ENCODE measurements at regions of chr13 and their contacts with region 1.

Region 1: DNA sequence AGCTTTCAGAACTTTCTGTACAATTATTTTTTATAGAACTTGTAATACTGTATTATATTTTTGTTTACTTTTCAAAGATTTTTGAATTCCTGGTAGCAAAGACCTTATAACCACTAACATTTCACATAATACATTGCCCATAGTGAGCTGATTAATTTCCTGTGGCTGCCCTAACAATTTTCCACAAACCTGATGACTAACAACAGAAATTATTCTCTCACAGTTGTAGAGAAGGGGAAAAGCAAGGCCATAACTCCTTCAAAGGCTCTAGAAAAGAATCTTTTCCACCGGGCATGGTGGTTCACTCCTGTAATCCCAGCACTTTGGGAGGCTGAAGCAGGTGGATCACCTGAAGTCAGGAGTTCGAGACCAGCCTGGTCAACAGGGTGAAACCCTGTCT is 19.1 kb downstream of the KLF12 start:
- DNase-seq: no peak
- ATAC-seq: peak in 2 of 3 donors; percentile 34 to 42
- H3K4me3 ChIP-seq: no peak overlapping the region
- H3K4me3 Mint-ChIP-seq: peak overlapping the region; percentile 29
- H3K27ac ChIP-seq: peak overlapping the region; percentile 8
- H3K27ac Mint-ChIP-seq: peak overlapping the region; percentile 67 to 68
- H3K4me1 ChIP-seq: peaks cover 11% of the 10 kb centered on the region
- H3K4me1 Mint-ChIP-seq: peaks cover 74 to 79% of the 10 kb centered on the region in 2 donors
- H3K27me3 ChIP-seq: no peaks in the 10 kb centered on the region
- H3K27me3 Mint-ChIP-seq: no peaks in the 10 kb centered on the region
- CTCF ChIP-seq: no peak

Region 2: GRCh38 chr13:74074723-74075122 is 40.4 kb before region 1 on chr13:
- intact Hi-C with region 1: loop called (anchors 5 kb)
- DNase-seq: no peak
- ATAC-seq: no peak
- H3K4me3 ChIP-seq: no peak overlapping the region
- H3K4me3 Mint-ChIP-seq: no peak overlapping the region
- H3K27ac ChIP-seq: no peak overlapping the region
- H3K27ac Mint-ChIP-seq: peak overlapping the region; percentile 0 to 17
- H3K4me1 ChIP-seq: peaks cover 13% of the 10 kb centered on the region
- H3K4me1 Mint-ChIP-seq: peaks cover 57 to 70% of the 10 kb centered on the region in 2 donors
- H3K27me3 ChIP-seq: no peaks in the 10 kb centered on the region
- H3K27me3 Mint-ChIP-seq: no peaks in the 10 kb centered on the region
- CTCF ChIP-seq: no peak

Region 3: GRCh38 chr13:74203576-74203975 is 88.4 kb after region 1 on chr13:
- intact Hi-C with region 1: no loop called
- DNase-seq: no peak
- ATAC-seq: no peak
- H3K4me3 ChIP-seq: no peak overlapping the region
- H3K4me3 Mint-ChIP-seq: no peak overlapping the region
- H3K27ac ChIP-seq: no peak overlapping the region
- H3K27ac Mint-ChIP-seq: no peak overlapping the region
- H3K4me1 ChIP-seq: no peaks in the 10 kb centered on the region
- H3K4me1 Mint-ChIP-seq: no peaks in the 10 kb centered on the region
- H3K27me3 ChIP-seq: no peaks in the 10 kb centered on the region
- H3K27me3 Mint-ChIP-seq: peaks cover 27 to 60% of the 10 kb centered on the region in 2 donors
- CTCF ChIP-seq: no peak

Measured in natural killer cell (primary cell).